A673 (cell line): ENCODE measurements at regions of chr22 and their contacts with region 1.

Region 1: GRCh38 chr22:17647991-17648390 is 9.4 kb downstream of the BCL2L13 start:
- DNase-seq: no peak
- H3K4me3 ChIP-seq: no peak overlapping the region
- H3K27ac ChIP-seq: no peak overlapping the region
- H3K4me1 ChIP-seq: no peaks in the 10 kb centered on the region
- H3K27me3 ChIP-seq: no peaks in the 10 kb centered on the region
- CTCF ChIP-seq: no peak

Region 2: GRCh38 chr22:17570851-17571641 is 76.9 kb before region 1 on chr22:
- CTCF ChIA-PET with region 1: no interaction called
- POLR2A ChIA-PET with region 1: no interaction called
- intact Hi-C with region 1: loop called (anchors 10 kb)
- DNase-seq: peak; percentile 67
- H3K4me3 ChIP-seq: no peak overlapping the region
- H3K27ac ChIP-seq: peak overlapping the region; percentile 38
- H3K4me1 ChIP-seq: peaks cover 28% of the 10 kb centered on the region
- H3K27me3 ChIP-seq: no peaks in the 10 kb centered on the region
- CTCF ChIP-seq: no peak

Region 3: DNA sequence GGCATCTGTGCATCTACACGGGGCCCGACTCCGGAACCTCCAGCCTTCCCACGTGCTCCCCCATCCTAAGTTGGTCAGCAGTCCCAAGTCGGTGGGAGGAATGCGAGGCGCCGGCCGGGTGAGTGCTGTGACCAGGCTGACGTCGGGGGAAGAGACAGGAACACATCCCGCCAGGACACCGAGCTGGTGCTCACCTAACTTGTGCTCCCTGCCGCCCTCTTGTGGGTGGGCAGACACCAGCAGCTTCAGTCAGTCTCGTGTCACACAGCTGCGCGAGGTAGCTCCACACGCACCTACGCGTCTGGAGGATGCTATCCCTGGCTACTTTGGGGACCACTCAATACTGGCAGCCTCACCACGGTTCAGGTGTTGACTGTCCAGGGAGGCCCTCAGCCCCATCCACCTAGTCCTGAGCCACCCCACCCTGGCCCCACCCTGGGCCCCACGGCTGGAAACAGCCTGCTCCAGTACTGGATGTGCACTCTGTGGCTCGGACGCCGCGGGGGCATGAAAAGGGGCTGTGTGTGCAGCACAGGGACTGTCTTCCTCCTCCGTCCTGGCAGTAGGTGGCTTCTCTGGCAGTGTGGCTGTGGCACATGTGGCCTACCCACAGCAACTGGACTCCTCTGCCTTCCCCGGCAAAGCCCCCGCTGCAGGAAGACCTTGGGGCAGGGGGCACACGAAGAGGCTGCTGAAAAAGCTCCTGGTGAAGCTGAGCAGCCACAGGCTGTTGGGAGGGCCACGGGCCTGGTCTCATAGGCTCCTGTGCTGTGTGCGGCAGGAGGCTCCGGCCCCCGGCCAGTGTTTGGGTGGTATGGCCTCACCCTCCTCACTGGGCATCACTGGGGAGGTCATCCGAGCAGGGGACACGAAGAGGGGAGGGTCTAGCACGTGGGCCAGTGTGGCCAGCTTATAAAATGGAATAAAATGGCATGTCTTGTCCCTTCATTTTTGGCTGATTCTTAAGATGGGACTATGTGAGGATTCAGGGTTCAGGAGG is 137.5 kb after region 1 on chr22:
- CTCF ChIA-PET with region 1: no interaction called
- POLR2A ChIA-PET with region 1: no interaction called
- intact Hi-C with region 1: no loop called
- DNase-seq: peak; percentile 50
- H3K4me3 ChIP-seq: no peak overlapping the region
- H3K27ac ChIP-seq: no peak overlapping the region
- H3K4me1 ChIP-seq: peaks cover 23% of the 10 kb centered on the region
- H3K27me3 ChIP-seq: no peaks in the 10 kb centered on the region
- CTCF ChIP-seq: peak; percentile 64

Region 4: DNA sequence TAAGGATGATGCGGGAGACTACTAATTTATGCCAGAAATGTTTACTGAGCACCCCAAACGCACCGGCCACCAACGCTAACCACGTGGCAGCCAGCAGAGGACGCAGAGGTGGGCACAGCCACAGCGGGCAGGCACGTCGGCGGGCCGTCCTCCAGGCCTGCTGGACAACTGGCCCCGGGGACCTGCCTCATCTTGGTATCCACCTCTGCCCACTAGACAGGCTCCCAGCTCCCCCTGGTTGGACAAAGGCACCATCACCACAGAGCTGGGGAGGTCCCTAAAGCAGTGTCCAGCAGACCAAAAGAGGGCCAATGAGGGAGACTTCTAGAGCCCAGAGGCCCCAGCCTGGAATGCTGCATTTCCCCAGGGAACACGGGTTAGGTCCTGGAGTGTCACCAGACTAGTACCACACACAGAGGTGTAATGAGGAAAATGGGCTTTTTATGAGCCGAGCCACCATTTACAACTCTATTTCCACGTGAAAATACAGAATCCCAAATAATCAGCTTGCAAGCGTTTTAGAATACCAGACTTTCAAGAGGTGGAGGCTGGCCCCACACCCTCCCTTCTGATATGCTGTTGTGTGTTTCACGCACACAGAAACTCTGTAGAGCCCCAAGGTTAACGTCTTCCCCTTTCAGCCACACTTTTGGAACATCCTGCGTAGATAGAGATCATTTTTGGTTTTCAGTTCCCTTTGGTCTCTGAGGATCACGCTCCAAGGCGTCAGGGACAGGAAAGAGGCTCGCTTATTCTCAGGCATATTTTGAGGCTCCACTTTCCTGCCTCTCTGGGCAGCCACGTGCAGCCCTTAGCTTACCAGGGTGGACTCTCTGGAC is 149.9 kb after region 1 on chr22:
- CTCF ChIA-PET with region 1: no interaction called
- POLR2A ChIA-PET with region 1: interaction called, 10 read pairs
- intact Hi-C with region 1: no loop called
- DNase-seq: no peak
- H3K4me3 ChIP-seq: no peak overlapping the region
- H3K27ac ChIP-seq: no peak overlapping the region
- H3K4me1 ChIP-seq: no peaks in the 10 kb centered on the region
- H3K27me3 ChIP-seq: no peaks in the 10 kb centered on the region
- CTCF ChIP-seq: no peak